ENCODE measurements at regions of chr17 and their contacts with region 1.

Region 1: GRCh38 chr17:40303009-40303657 is 5.8 kb upstream of the RARA start:
- DNase-seq: peak in 1 of 2 experiments; percentile 71
- H3K4me3 ChIP-seq: no peak overlapping the region
- H3K4me3 Mint-ChIP-seq: no peak overlapping the region
- H3K27ac Mint-ChIP-seq: peak overlapping the region; percentile 29
- H3K4me1 ChIP-seq: peaks cover 20% of the 10 kb centered on the region
- H3K4me1 Mint-ChIP-seq: peaks cover 16% of the 10 kb centered on the region
- H3K27me3 ChIP-seq: no peaks in the 10 kb centered on the region
- H3K27me3 Mint-ChIP-seq: no peaks in the 10 kb centered on the region
- CTCF ChIP-seq: peak; percentile 67 to 71

Region 2: GRCh38 chr17:40347319-40348135 is 44.4 kb after region 1 on chr17:
- CTCF ChIA-PET with region 1: interaction called, 4 read pairs
- POLR2A ChIA-PET with region 1: interaction called, 3 read pairs
- intact Hi-C with region 1: loop called (anchors 2 kb)
- DNase-seq: no peak
- H3K4me3 ChIP-seq: no peak overlapping the region
- H3K4me3 Mint-ChIP-seq: peak overlapping the region; percentile 28
- H3K27ac Mint-ChIP-seq: peak overlapping the region; percentile 25
- H3K4me1 ChIP-seq: peaks cover 38% of the 10 kb centered on the region
- H3K4me1 Mint-ChIP-seq: peaks cover 28% of the 10 kb centered on the region
- H3K27me3 ChIP-seq: no peaks in the 10 kb centered on the region
- H3K27me3 Mint-ChIP-seq: no peaks in the 10 kb centered on the region
- CTCF ChIP-seq: no peak

Region 3: DNA sequence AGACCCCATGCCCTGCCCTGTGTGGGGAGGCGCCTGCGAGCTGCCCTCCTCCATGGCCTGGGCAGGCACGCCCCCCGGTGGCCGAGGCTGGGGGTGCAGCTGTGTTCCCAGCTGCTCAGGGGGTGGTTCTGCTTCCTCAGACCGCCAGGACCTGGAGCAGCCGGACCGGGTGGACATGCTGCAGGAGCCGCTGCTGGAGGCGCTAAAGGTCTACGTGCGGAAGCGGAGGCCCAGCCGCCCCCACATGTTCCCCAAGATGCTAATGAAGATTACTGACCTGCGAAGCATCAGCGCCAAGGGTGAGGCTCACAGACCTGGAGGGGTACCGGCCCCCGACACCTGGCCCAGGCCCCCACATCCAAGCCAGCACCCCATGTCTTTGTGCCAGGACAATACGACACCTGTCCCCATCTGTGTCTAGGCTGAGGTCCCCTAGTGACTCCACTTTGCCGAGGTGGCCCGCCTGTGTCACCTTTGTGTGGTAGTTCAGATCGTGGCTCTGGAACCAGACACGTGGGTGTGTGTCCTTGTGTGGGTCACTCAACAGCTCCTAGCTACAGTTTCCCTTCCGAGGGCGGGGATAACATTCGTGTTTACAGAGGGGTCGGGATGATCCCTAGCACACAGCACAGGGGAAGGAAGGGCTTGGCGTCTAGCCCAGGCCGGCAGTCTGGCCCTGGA is 52.1 kb after region 1 on chr17:
- CTCF ChIA-PET with region 1: interaction called, 21 read pairs
- POLR2A ChIA-PET with region 1: no interaction called
- intact Hi-C with region 1: loop called (anchors 1 kb)
- DNase-seq: peak; percentile 72 to 90
- H3K4me3 ChIP-seq: no peak overlapping the region
- H3K4me3 Mint-ChIP-seq: no peak overlapping the region
- H3K27ac Mint-ChIP-seq: no peak overlapping the region
- H3K4me1 ChIP-seq: no peaks in the 10 kb centered on the region
- H3K4me1 Mint-ChIP-seq: peaks cover 8% of the 10 kb centered on the region
- H3K27me3 ChIP-seq: no peaks in the 10 kb centered on the region
- H3K27me3 Mint-ChIP-seq: no peaks in the 10 kb centered on the region
- CTCF ChIP-seq: peak; percentile 93 to 96